CD4-positive, alpha-beta T cell (primary cell): ENCODE measurements at regions of chr13 and their contacts with region 1.

Region 1: DNA sequence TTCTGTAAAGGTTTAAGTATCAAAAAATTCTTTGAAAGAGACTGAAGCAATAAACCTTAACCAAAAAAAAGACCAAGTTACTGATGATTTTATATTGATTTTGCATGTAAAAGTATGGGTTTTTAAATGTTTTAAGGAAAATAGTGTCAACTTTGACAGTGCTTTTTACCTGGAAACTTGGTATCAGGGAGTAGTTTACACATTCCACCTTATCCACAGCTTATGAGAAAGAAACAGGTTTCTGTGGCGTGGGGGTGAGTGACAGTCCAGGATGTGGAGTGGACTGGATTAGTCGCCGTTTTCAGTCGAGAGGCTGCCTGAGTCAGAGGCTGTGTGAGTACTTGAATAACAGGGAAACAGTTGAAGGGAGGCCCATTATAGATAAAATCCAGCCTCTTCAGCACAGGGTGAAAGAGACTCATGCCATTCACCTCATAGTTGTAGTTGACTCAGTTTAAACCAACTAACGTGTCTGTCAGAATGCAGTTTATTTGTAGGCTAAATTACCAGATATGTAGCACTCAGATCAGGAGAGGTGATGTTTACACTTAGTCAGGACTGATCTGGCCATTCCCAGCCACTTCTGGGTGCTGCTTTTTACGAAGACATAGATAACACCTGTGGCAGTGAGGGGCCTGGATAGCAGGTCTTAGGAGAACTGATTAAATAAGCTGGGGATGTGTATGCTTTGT is 595 bp upstream of the GPR183 start:
- DNase-seq: peak in 10 of 14 experiments; percentile 36 to 79 (median 46)
- ATAC-seq: peak; percentile 35
- H3K4me3 ChIP-seq: peak overlapping the region; percentile 83
- H3K4me3 Mint-ChIP-seq: peak overlapping the region; percentile 97
- H3K27ac ChIP-seq: peak overlapping the region; percentile 46 to 80
- H3K27ac Mint-ChIP-seq: peak overlapping the region; percentile 89
- H3K4me1 ChIP-seq: peaks cover 59% of the 10 kb centered on the region
- H3K4me1 Mint-ChIP-seq: peaks cover 75% of the 10 kb centered on the region
- H3K27me3 ChIP-seq: no peaks in the 10 kb centered on the region
- H3K27me3 Mint-ChIP-seq: no peaks in the 10 kb centered on the region
- CTCF ChIP-seq: no peak

Region 2: DNA sequence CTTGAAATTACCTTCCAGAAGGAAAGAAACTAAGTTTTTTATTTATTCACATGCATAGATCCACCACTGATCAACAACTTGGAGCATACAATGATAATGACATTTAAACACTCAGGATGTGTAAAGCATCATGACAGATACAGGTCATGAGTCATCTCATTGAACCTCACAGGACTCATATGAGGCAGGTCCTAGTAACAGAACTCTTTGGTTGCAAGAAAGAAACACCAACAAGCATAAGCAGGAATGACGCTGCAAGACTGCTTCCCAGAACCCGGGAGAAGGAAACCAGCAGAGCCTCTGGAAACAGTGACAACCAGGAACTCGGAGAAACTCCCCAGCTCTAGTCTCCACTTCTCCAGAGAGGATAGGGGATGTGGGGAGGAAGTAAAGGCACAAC is 1415.1 kb before region 1 on chr13:
- CTCF ChIA-PET with region 1: no interaction called
- POLR2A ChIA-PET with region 1: no interaction called
- intact Hi-C with region 1: no loop called
- DNase-seq: no peak
- ATAC-seq: no peak
- H3K4me3 ChIP-seq: no peak overlapping the region
- H3K4me3 Mint-ChIP-seq: no peak overlapping the region
- H3K27ac ChIP-seq: no peak overlapping the region
- H3K27ac Mint-ChIP-seq: no peak overlapping the region
- H3K4me1 ChIP-seq: no peaks in the 10 kb centered on the region
- H3K4me1 Mint-ChIP-seq: no peaks in the 10 kb centered on the region
- H3K27me3 ChIP-seq: no peaks in the 10 kb centered on the region
- H3K27me3 Mint-ChIP-seq: peaks cover 25% of the 10 kb centered on the region
- CTCF ChIP-seq: no peak

Region 3: DNA sequence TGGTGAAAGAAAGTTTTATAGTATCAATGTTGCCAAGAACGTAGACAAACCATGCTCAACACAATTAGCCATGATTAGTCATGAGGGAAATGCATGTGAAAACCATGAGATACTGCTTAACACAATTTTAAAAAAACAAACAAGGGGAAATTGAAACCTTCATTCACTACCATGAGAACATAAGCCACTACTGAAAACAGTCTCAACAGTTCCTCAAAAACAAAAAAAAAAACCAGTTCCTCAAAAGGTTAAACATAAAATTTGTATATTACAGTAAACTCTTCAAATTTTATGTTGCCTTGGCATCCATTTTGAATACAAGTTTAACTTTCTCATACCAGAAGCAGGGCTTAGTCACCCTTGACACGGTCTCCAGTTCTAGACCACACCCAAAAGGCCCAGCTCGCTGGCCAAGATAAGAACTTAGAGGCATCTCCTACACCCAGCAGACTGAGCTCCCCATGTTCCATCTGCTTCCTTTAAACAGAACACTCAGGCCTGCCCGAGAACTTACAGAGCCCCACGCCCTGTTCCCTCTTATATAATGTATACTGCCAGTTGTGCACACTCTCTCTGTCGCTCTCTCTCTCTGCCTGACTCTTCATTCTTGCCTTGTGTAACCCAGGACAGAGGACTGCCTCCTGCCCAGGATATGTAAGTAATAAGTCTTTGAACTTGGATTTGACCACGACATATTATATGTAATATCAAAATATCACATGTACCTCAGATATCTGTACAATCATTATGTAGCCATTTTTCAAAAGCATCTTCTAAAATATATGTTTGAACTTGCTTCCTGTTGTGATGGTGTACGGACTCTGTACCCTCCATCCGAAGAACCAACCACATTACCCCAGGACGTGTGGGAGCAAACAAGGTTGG is 798.3 kb before region 1 on chr13:
- CTCF ChIA-PET with region 1: no interaction called
- POLR2A ChIA-PET with region 1: no interaction called
- intact Hi-C with region 1: no loop called
- DNase-seq: peak in 9 of 14 experiments; percentile 15 to 80 (median 36)
- ATAC-seq: peak; percentile 71
- H3K4me3 ChIP-seq: no peak overlapping the region
- H3K4me3 Mint-ChIP-seq: peak overlapping the region; percentile 4
- H3K27ac ChIP-seq: peak overlapping the region in 1 of 2 donors; percentile 9
- H3K27ac Mint-ChIP-seq: peak overlapping the region; percentile 82
- H3K4me1 ChIP-seq: peaks cover 68% of the 10 kb centered on the region
- H3K4me1 Mint-ChIP-seq: peaks cover 96% of the 10 kb centered on the region
- H3K27me3 ChIP-seq: no peaks in the 10 kb centered on the region
- H3K27me3 Mint-ChIP-seq: no peaks in the 10 kb centered on the region
- CTCF ChIP-seq: no peak

Region 4: DNA sequence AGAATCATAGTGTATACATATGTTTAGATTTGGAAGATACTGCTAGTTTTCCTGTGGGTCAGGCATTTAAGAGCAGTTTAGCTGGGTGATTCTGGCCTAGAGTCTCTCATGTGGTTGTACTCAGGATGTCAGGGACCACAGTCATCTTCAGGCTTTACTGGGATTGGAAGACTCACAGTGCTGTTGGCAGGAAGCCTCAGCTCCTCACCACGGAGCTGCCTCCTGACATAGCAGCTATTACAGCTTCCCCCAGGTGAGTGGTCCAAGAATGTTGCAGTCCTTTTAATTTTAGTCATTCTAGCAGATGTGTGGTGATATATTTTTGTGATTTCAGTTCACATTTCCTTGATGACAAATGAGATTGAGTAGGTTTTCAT is 32.7 kb before region 1 on chr13:
- CTCF ChIA-PET with region 1: interaction called, 44 read pairs
- POLR2A ChIA-PET with region 1: interaction called, 42 read pairs
- intact Hi-C with region 1: loop called in 1 of 2 experiments (anchors 5 kb)
- DNase-seq: peak in 7 of 14 experiments; percentile 34 to 85 (median 65)
- ATAC-seq: peak; percentile 78
- H3K4me3 ChIP-seq: no peak overlapping the region
- H3K4me3 Mint-ChIP-seq: peak overlapping the region; percentile 49
- H3K27ac ChIP-seq: peak overlapping the region; percentile 16 to 49
- H3K27ac Mint-ChIP-seq: peak overlapping the region; percentile 87
- H3K4me1 ChIP-seq: peaks cover 65% of the 10 kb centered on the region
- H3K4me1 Mint-ChIP-seq: peaks cover 100% of the 10 kb centered on the region
- H3K27me3 ChIP-seq: no peaks in the 10 kb centered on the region
- H3K27me3 Mint-ChIP-seq: no peaks in the 10 kb centered on the region
- CTCF ChIP-seq: no peak

Region 5: DNA sequence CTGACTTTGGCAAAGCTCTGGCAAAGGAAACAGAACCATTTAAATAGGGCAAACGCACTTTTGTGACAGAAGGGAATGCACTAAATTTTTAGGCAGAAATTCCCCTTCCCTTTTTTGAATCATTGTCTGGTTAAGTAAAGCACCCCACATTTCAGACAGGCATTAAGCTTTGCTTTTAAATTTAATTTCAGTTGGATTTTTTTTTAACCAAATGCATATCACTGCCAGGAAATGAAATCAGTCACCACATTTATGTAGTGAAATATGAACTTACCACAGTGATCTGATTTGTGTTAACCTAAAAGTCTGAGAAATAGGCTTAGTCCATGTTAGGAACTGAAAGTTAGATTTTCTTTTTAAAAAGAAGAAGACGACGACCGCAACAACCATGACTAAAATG is 11.4 kb before region 1 on chr13:
- CTCF ChIA-PET with region 1: interaction called, 5 read pairs
- POLR2A ChIA-PET with region 1: interaction called, 24 read pairs
- intact Hi-C with region 1: loop called in 1 of 2 experiments (anchors 1 kb)
- DNase-seq: peak in 3 of 14 experiments; percentile 63 to 74 (median 68)
- ATAC-seq: peak; percentile 60
- H3K4me3 ChIP-seq: peak overlapping the region; percentile 28
- H3K4me3 Mint-ChIP-seq: peak overlapping the region; percentile 86
- H3K27ac ChIP-seq: peak overlapping the region; percentile 39 to 78
- H3K27ac Mint-ChIP-seq: peak overlapping the region; percentile 100
- H3K4me1 ChIP-seq: peaks cover 43% of the 10 kb centered on the region
- H3K4me1 Mint-ChIP-seq: peaks cover 93% of the 10 kb centered on the region
- H3K27me3 ChIP-seq: no peaks in the 10 kb centered on the region
- H3K27me3 Mint-ChIP-seq: no peaks in the 10 kb centered on the region
- CTCF ChIP-seq: no peak

Region 6: DNA sequence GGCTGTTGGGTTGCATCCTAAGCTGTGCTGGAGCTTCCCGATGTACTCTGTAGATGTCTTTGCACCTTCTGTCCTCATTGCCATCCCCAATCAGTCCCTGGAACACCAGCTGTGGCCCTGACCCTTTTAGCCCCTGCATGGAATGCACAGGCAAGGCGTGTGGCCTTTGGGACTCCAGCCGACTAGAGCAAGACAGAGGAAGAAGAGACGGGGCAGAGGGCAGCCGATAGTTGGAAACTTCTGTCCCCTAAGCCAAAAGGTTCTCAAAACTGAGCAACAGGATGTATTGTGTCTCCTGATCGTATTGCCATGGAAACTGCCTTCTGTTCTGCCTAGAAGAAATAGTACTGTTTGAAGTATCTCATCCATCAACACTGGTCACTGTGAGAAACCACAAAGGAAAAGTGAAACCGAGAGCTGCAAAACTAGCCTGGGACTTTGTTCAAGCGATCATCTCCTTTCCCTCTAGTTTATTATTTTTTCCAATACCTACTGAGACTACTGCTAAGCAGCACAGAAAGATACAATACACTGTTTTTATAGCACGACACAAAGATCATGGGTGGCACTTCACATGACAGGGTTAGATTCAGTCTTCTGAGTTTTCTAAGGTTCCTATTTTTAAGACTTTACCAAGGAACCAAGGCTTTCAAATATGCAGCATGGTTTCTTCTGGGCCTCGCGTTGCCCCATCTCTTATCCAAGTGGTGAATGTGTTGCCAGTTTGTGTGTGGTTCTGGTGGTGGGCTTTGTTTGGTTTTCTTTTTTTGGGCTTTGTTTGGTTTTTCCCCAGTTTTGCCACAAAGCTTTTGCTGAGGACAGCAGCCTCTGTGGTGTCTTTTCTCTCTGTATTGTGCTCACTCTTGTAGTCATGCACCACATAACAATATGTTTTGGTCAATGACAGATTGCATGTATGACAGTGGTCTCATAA is 48.6 kb after region 1 on chr13:
- CTCF ChIA-PET with region 1: interaction called, 11 read pairs
- POLR2A ChIA-PET with region 1: interaction called, 220 read pairs
- intact Hi-C with region 1: loop called in 1 of 2 experiments (anchors 1 kb)
- DNase-seq: peak in 12 of 14 experiments; percentile 42 to 97 (median 56)
- ATAC-seq: peak; percentile 54
- H3K4me3 ChIP-seq: peak overlapping the region; percentile 19
- H3K4me3 Mint-ChIP-seq: peak overlapping the region; percentile 49
- H3K27ac ChIP-seq: peak overlapping the region; percentile 93 to 97
- H3K27ac Mint-ChIP-seq: peak overlapping the region; percentile 97
- H3K4me1 ChIP-seq: peaks cover 95% of the 10 kb centered on the region
- H3K4me1 Mint-ChIP-seq: peaks cover 100% of the 10 kb centered on the region
- H3K27me3 ChIP-seq: no peaks in the 10 kb centered on the region
- H3K27me3 Mint-ChIP-seq: no peaks in the 10 kb centered on the region
- CTCF ChIP-seq: no peak

Region 7: DNA sequence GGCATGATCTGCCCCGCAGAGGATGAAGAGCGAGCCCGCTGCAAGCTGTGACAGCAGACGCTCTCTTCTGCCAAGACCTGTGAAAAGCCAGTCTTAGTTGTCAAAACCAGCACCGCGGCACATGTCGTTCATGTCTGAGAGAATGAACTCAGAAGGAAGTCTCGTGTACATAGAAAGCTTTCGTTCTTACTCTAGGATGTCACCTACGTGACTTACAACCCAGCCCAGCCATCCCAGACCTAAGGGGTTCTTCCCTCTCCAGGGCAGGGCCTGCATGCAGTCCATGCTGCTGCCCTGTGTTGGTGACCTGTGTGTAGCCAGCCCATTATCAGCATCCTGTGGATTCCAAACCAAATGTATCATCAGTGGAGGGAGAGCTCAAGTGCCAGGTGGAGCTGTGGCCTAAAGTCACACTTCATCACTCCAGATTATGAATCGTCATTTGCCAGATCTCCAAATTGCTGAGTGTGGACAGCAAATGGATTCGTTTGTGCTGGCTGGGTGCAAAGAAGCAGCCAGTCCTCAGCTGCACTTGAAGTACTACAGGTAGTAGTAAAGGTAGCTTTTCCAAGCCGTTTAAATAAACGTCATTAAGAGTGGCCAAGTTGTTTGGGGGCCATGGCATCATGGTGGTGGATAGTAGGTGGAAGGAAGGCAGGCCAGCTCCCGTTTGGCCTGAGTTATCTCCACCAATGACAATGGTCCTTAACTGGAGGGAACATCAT is 73.3 kb after region 1 on chr13:
- CTCF ChIA-PET with region 1: interaction called, 3 read pairs
- POLR2A ChIA-PET with region 1: interaction called, 63 read pairs
- intact Hi-C with region 1: loop called in 1 of 2 experiments (anchors 2 kb)
- DNase-seq: peak in 13 of 14 experiments; percentile 42 to 77 (median 57)
- ATAC-seq: peak; percentile 40
- H3K4me3 ChIP-seq: no peak overlapping the region
- H3K4me3 Mint-ChIP-seq: peak overlapping the region; percentile 65
- H3K27ac ChIP-seq: peak overlapping the region; percentile 65 to 87
- H3K27ac Mint-ChIP-seq: peak overlapping the region; percentile 88
- H3K4me1 ChIP-seq: peaks cover 89% of the 10 kb centered on the region
- H3K4me1 Mint-ChIP-seq: peaks cover 95% of the 10 kb centered on the region
- H3K27me3 ChIP-seq: no peaks in the 10 kb centered on the region
- H3K27me3 Mint-ChIP-seq: no peaks in the 10 kb centered on the region
- CTCF ChIP-seq: no peak

Region 8: GRCh38 chr13:99436686-99437416 is 129.1 kb after region 1 on chr13:
- CTCF ChIA-PET with region 1: interaction called, 21 read pairs
- POLR2A ChIA-PET with region 1: interaction called, 12 read pairs
- intact Hi-C with region 1: loop called in 1 of 2 experiments (anchors 2 kb)
- DNase-seq: peak; percentile 91 to 98 (median 94)
- ATAC-seq: peak; percentile 52
- H3K4me3 ChIP-seq: peak overlapping the region; percentile 32
- H3K4me3 Mint-ChIP-seq: peak overlapping the region; percentile 47
- H3K27ac ChIP-seq: peak overlapping the region in 1 of 2 donors; percentile 11
- H3K27ac Mint-ChIP-seq: peak overlapping the region; percentile 84
- H3K4me1 ChIP-seq: peaks cover 57% of the 10 kb centered on the region
- H3K4me1 Mint-ChIP-seq: peaks cover 64% of the 10 kb centered on the region
- H3K27me3 ChIP-seq: no peaks in the 10 kb centered on the region
- H3K27me3 Mint-ChIP-seq: no peaks in the 10 kb centered on the region
- CTCF ChIP-seq: peak; percentile 100